Activated naive CD4-positive, alpha-beta T cell treated with anti-CD3 and anti-CD28 coated beads for 36 hours (primary cell): ENCODE measurements at regions of chr3 and their contacts with region 1.

Region 1: GRCh38 chr3:50627407-50628051 is 10.6 kb downstream of the MAPKAPK3 start:
- DNase-seq: peak; percentile 62
- H3K4me3 Mint-ChIP-seq: no peak overlapping the region
- H3K27ac Mint-ChIP-seq: peak overlapping the region; percentile 79
- H3K4me1 Mint-ChIP-seq: peaks cover 98% of the 10 kb centered on the region
- H3K27me3 Mint-ChIP-seq: no peaks in the 10 kb centered on the region

Region 2: GRCh38 chr3:50550079-50550741 is 77.3 kb before region 1 on chr3:
- CTCF ChIA-PET with region 1: no interaction called
- intact Hi-C with region 1: no loop called
- DNase-seq: peak; percentile 83
- H3K4me3 Mint-ChIP-seq: no peak overlapping the region
- H3K27ac Mint-ChIP-seq: no peak overlapping the region
- H3K4me1 Mint-ChIP-seq: no peaks in the 10 kb centered on the region
- H3K27me3 Mint-ChIP-seq: no peaks in the 10 kb centered on the region

Region 3: GRCh38 chr3:50617096-50617791 is 10.3 kb before region 1 on chr3 and contains the start of gene MAPKAPK3:
- CTCF ChIA-PET with region 1: interaction called, 32 read pairs
- intact Hi-C with region 1: loop called (anchors 1 kb)
- DNase-seq: peak; percentile 48
- H3K4me3 Mint-ChIP-seq: peak within 1 kb of the TSS; percentile 77
- H3K27ac Mint-ChIP-seq: peak within 1 kb of the TSS; percentile 86
- H3K4me1 Mint-ChIP-seq: peaks cover 60% of the 10 kb centered on the region
- H3K27me3 Mint-ChIP-seq: no peaks in the 10 kb centered on the region
- total RNA-seq, gene MAPKAPK3: 105 to 106 TPM

Region 4: GRCh38 chr3:50642382-50642781 is 14.9 kb after region 1 on chr3:
- CTCF ChIA-PET with region 1: interaction called, 3 read pairs
- intact Hi-C with region 1: loop called (anchors 1 kb)
- DNase-seq: peak; percentile 56
- H3K4me3 Mint-ChIP-seq: no peak overlapping the region
- H3K27ac Mint-ChIP-seq: peak overlapping the region; percentile 33
- H3K4me1 Mint-ChIP-seq: peaks cover 21% of the 10 kb centered on the region
- H3K27me3 Mint-ChIP-seq: no peaks in the 10 kb centered on the region